Thyroid gland (tissue), 4 donors: ENCODE measurements at regions of chr2 and their contacts with region 1.

Region 1: GRCh38 chr2:105521205-105521604 is 122.4 kb upstream of the FHL2 start:
- DNase-seq: no peak
- H3K4me3 ChIP-seq: no peak overlapping the region
- H3K27ac ChIP-seq: no peak overlapping the region
- H3K4me1 ChIP-seq: peaks cover 18 to 28% of the 10 kb centered on the region in 2 donors
- H3K27me3 ChIP-seq: no peaks in the 10 kb centered on the region
- CTCF ChIP-seq: peak; percentile 25 to 96 (median 50)
- POLR2A ChIP-seq: no peak

Region 2: GRCh38 chr2:105114551-105114950 is 406.7 kb before region 1 on chr2:
- intact Hi-C with region 1: loop called (anchors 10 kb)
- DNase-seq: peak in 1 of 2 donors; percentile 11
- H3K4me3 ChIP-seq: no peak overlapping the region
- H3K27ac ChIP-seq: no peak overlapping the region
- H3K4me1 ChIP-seq: no peaks in the 10 kb centered on the region
- H3K27me3 ChIP-seq: no peaks in the 10 kb centered on the region
- CTCF ChIP-seq: peak; percentile 47 to 95 (median 64)
- POLR2A ChIP-seq: no peak

Region 3: DNA sequence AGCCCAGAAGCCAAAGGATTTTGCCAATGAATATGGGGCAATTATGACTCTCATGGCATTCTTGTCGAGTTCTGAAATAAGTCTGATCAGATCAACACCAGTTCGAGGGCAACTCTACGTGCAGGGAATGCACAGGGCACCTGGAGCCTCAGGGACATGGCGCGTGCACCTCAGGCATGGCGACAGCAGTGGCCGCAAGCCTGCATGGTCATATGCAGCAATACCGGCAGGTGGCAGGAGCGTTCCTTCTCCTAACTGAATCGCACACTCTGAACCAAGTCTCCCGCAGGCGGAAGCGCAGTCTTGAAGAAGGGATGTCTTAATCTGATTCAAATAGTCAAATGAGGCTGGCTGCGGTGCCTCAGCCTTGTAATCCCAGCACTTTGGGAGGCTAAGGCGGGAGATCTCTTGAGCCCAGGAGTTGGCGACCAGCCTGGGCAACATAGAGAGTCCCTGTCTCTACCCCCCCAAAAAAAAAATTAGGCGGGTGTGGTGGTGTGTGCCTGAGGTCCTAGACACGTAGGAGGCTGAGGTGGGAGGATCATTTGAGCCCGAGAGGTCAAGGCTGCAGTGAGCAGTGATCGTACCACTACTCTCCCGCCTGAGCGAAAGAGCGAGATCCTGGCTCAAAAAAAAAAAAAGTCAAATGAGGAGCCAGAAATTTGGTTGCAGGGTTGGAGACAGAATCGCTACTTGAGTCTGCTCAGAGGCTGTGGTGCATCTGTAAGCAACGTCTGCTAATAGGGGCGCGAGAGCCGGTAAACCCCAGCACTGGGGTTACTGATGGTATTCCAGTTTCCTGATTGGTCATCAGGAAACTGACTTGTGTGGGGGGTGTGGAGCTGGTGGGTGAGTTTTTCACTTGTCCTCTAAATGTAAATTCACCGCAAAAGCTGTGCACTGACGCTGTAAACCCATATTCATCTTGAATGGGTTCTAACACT is 151.2 kb before region 1 on chr2:
- intact Hi-C with region 1: loop called (anchors 2 kb)
- DNase-seq: peak; percentile 91 to 93
- H3K4me3 ChIP-seq: no peak overlapping the region
- H3K27ac ChIP-seq: no peak overlapping the region
- H3K4me1 ChIP-seq: peaks cover 28 to 30% of the 10 kb centered on the region in 2 donors
- H3K27me3 ChIP-seq: no peaks in the 10 kb centered on the region
- CTCF ChIP-seq: peak; percentile 76 to 98 (median 95)
- POLR2A ChIP-seq: no peak